Heart right ventricle (tissue), 16 donors: ENCODE measurements at regions of chr11 and their contacts with region 1.

Region 1: DNA sequence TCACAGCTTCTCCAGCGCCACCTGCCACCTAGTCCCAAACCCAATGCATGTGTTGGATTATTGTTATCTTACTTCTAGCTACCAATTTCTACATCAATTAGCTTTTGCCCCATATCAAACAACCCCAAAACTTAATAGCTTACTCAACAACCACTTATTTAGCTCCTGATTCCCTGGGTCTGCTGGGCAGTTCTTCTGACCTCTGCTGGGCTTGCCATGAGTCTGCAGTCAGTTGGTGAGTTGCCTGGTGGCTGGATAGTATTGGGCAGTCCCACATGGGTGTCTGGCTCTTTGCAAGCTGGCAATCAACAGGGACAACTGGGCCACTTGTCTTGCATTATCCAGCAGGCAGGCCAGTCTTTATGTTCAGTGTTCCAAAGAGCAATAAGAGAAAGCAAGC is 13.6 kb upstream of the MS4A15 start:
- DNase-seq: no peak
- ATAC-seq: no peak
- H3K4me3 ChIP-seq: no peak overlapping the region
- H3K27ac ChIP-seq: no peak overlapping the region
- H3K4me1 ChIP-seq: no peaks in the 10 kb centered on the region
- H3K27me3 ChIP-seq: peaks cover 0 to 11% (median 6%) of the 10 kb centered on the region in 7 donors
- CTCF ChIP-seq: no peak

Region 2: GRCh38 chr11:60680455-60681119 is 62.5 kb before region 1 on chr11:
- intact Hi-C with region 1: loop called in 1 of 10 experiments (anchors 10 kb)
- DNase-seq: no peak
- ATAC-seq: no peak
- H3K4me3 ChIP-seq: no peak overlapping the region
- H3K27ac ChIP-seq: no peak overlapping the region
- H3K4me1 ChIP-seq: no peaks in the 10 kb centered on the region
- H3K27me3 ChIP-seq: no peaks in the 10 kb centered on the region
- CTCF ChIP-seq: no peak

Region 3: GRCh38 chr11:60762851-60763691 is 20.0 kb after region 1 on chr11:
- intact Hi-C with region 1: no loop called
- DNase-seq: no peak
- ATAC-seq: no peak
- H3K4me3 ChIP-seq: no peak overlapping the region
- H3K27ac ChIP-seq: no peak overlapping the region
- H3K4me1 ChIP-seq: peaks cover 0 to 11% (median 0%) of the 10 kb centered on the region in 9 donors
- H3K27me3 ChIP-seq: peaks cover 6 to 59% (median 46%) of the 10 kb centered on the region in 7 donors
- CTCF ChIP-seq: peak in 3 of 9 donors; percentile 7 to 17 (median 10)

Region 4: GRCh38 chr11:60810569-60810968 is 67.5 kb after region 1 on chr11:
- intact Hi-C with region 1: no loop called
- DNase-seq: no peak
- ATAC-seq: peak; percentile 17 to 73 (median 45)
- H3K4me3 ChIP-seq: no peak overlapping the region
- H3K27ac ChIP-seq: peak overlapping the region in 5 of 10 donors; percentile 5 to 43 (median 26)
- H3K4me1 ChIP-seq: peaks cover 0 to 8% (median 0%) of the 10 kb centered on the region in 9 donors
- H3K27me3 ChIP-seq: peaks cover 0 to 5% (median 0%) of the 10 kb centered on the region in 7 donors
- CTCF ChIP-seq: no peak